Heart right ventricle (tissue), 16 donors: ENCODE measurements at regions of chr19 and their contacts with region 1.

Region 1: DNA sequence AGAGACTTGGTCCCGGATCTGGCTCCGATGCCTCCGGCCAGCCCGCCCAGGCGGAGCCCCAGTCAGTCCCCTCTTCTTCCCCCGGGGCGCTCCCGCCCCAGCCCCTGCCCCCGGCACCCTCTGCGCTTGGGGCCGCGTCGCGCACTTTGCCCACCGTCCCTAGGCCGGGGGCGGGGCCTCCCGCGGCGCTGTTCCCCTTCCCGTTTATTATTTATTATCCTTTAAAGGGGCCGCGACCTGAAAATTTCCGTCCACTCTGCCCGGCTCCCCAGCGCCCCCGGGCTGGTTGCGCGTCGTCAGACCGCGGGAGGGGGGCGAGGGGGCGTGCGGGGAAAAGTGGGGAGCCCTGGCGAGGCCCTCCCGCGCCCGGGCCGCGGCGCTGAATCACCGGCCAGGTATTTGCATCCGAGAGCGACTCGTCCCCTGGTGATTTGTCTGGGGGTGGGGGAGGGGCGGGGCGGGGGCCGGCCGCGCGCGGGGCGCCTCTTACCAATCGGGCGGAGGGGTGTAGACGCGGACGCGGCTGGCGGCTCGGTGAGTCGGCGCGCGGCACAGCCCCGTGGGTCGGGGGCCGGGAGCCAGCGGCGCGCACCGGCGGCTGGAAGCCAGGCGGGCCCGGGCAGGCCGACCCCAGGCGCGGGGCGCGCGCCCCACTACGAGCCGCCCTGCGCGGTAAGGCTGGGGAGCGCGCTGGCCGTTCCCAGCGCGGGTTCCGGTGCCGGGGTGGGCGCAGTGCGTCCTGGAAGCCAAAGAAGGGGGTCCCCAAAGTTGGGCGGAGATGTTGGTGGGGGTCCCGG is at the start of gene ARID3A:
- DNase-seq: peak; percentile 77 to 81
- ATAC-seq: peak; percentile 76 to 84 (median 80)
- H3K4me3 ChIP-seq: peak within 1 kb of the TSS; percentile 51 to 99 (median 84)
- H3K27ac ChIP-seq: peak within 1 kb of the TSS in 9 of 10 donors; percentile 54 to 98 (median 85)
- H3K4me1 ChIP-seq: peaks cover 7 to 52% (median 20%) of the 10 kb centered on the region in 9 donors
- H3K27me3 ChIP-seq: peaks cover 4 to 9% (median 8%) of the 10 kb centered on the region in 7 donors
- CTCF ChIP-seq: no peak
- total RNA-seq, gene ARID3A: 3.0 to 11.7 (median 5.3) TPM

Region 2: GRCh38 chr19:814258-815078 is 111.3 kb before region 1 on chr19:
- intact Hi-C with region 1: no loop called
- DNase-seq: peak in 1 of 2 donors; percentile 8
- ATAC-seq: peak in 3 of 8 donors; percentile 7 to 33 (median 10)
- H3K4me3 ChIP-seq: no peak overlapping the region
- H3K27ac ChIP-seq: no peak overlapping the region
- H3K4me1 ChIP-seq: no peaks in the 10 kb centered on the region
- H3K27me3 ChIP-seq: no peaks in the 10 kb centered on the region
- CTCF ChIP-seq: no peak

Region 3: GRCh38 chr19:860481-861101 is 65.1 kb before region 1 on chr19:
- intact Hi-C with region 1: loop called in 4 of 10 experiments (anchors 2 to 5 kb)
- DNase-seq: peak in 1 of 2 donors; percentile 75
- ATAC-seq: peak; percentile 46 to 67 (median 54)
- H3K4me3 ChIP-seq: peak overlapping the region; percentile 16 to 57 (median 46)
- H3K27ac ChIP-seq: peak overlapping the region in 8 of 10 donors; percentile 34 to 86 (median 78)
- H3K4me1 ChIP-seq: peaks cover 0 to 46% (median 10%) of the 10 kb centered on the region in 9 donors
- H3K27me3 ChIP-seq: peaks cover 0 to 51% (median 37%) of the 10 kb centered on the region in 7 donors
- CTCF ChIP-seq: peak in 5 of 9 donors; percentile 19 to 43 (median 25)

Region 4: GRCh38 chr19:871446-872265 is 54.1 kb before region 1 on chr19:
- intact Hi-C with region 1: no loop called
- DNase-seq: no peak
- ATAC-seq: peak in 1 of 8 donors; percentile 33
- H3K4me3 ChIP-seq: peak overlapping the region in 1 of 10 donors; percentile 18
- H3K27ac ChIP-seq: peak overlapping the region in 3 of 10 donors; percentile 49 to 71 (median 52)
- H3K4me1 ChIP-seq: peaks cover 0 to 40% (median 8%) of the 10 kb centered on the region in 9 donors
- H3K27me3 ChIP-seq: no peaks in the 10 kb centered on the region
- CTCF ChIP-seq: no peak

Region 5: GRCh38 chr19:887072-887471 is 38.7 kb before region 1 on chr19:
- intact Hi-C with region 1: no loop called
- DNase-seq: no peak
- ATAC-seq: no peak
- H3K4me3 ChIP-seq: no peak overlapping the region
- H3K27ac ChIP-seq: no peak overlapping the region
- H3K4me1 ChIP-seq: peaks cover 0 to 9% (median 3%) of the 10 kb centered on the region in 9 donors
- H3K27me3 ChIP-seq: no peaks in the 10 kb centered on the region
- CTCF ChIP-seq: no peak

Region 6: GRCh38 chr19:947265-948036 is 21.7 kb after region 1 on chr19:
- intact Hi-C with region 1: no loop called
- DNase-seq: peak; percentile 53 to 59
- ATAC-seq: peak; percentile 50 to 79 (median 72)
- H3K4me3 ChIP-seq: no peak overlapping the region
- H3K27ac ChIP-seq: peak overlapping the region in 1 of 10 donors; percentile 47
- H3K4me1 ChIP-seq: peaks cover 0 to 27% (median 0%) of the 10 kb centered on the region in 9 donors
- H3K27me3 ChIP-seq: no peaks in the 10 kb centered on the region
- CTCF ChIP-seq: no peak

Region 7: GRCh38 chr19:984165-984967 is 58.6 kb after region 1 on chr19 and contains the start of gene WDR18:
- intact Hi-C with region 1: loop called (anchors 1 to 2 kb)
- DNase-seq: peak; percentile 94 to 95
- ATAC-seq: peak; percentile 92 to 97 (median 96)
- H3K4me3 ChIP-seq: peak within 1 kb of the TSS; percentile 49 to 99 (median 94)
- H3K27ac ChIP-seq: peak within 1 kb of the TSS in 9 of 10 donors; percentile 77 to 92 (median 87)
- H3K4me1 ChIP-seq: peaks cover 4 to 36% (median 22%) of the 10 kb centered on the region in 9 donors
- H3K27me3 ChIP-seq: no peaks in the 10 kb centered on the region
- CTCF ChIP-seq: peak in 6 of 9 donors; percentile 14 to 48 (median 35)
- total RNA-seq, gene WDR18: 17.3 to 25.0 (median 20.3) TPM

Region 8: GRCh38 chr19:996051-996838 is 70.5 kb after region 1 on chr19:
- intact Hi-C with region 1: loop called in 2 of 10 experiments (anchors 1 to 2 kb)
- DNase-seq: no peak
- ATAC-seq: peak in 3 of 8 donors; percentile 4 to 14 (median 5)
- H3K4me3 ChIP-seq: peak overlapping the region in 1 of 10 donors; percentile 18
- H3K27ac ChIP-seq: no peak overlapping the region
- H3K4me1 ChIP-seq: peaks cover 2 to 21% (median 14%) of the 10 kb centered on the region in 9 donors
- H3K27me3 ChIP-seq: peaks cover 23 to 63% (median 59%) of the 10 kb centered on the region in 7 donors
- CTCF ChIP-seq: no peak

Region 9: DNA sequence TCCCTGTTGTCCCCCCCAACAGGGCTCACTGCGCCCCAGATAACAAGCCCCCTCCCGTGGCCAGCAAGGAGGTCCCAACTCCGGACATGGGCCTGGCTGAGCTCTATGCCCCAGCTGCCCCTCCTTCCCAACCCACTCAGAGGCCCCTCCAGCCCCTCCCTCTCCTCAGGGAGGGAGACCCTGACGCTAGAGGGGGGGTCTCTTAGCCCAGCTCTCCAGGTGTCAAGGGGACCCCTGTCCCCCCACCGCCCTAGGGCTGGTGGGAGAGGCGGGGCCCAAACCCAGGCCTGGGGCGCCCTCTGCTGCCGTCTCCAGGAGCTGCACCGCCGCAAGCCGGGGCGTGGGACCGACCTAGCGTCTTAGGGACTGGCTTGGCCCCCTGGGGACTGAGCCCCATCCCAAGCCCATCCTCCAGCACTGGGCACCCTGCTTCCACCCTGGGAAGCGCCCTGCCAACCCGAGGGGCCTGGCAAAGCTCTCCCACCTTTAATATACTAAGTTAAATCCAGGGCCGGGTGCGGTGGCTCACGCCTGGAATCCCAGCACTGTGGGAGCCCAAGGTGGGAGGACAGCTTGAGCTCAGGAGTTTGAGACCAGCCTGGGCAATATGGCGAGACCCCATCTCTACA is 75.9 kb after region 1 on chr19:
- intact Hi-C with region 1: loop called in 2 of 10 experiments (anchors 1 to 2 kb)
- DNase-seq: peak in 1 of 2 donors; percentile 68
- ATAC-seq: peak; percentile 46 to 77 (median 65)
- H3K4me3 ChIP-seq: no peak overlapping the region
- H3K27ac ChIP-seq: no peak overlapping the region
- H3K4me1 ChIP-seq: peaks cover under 1 to 19% (median 13%) of the 10 kb centered on the region in 9 donors
- H3K27me3 ChIP-seq: peaks cover 21 to 70% (median 54%) of the 10 kb centered on the region in 7 donors
- CTCF ChIP-seq: peak; percentile 77 to 96 (median 90)

Region 10: GRCh38 chr19:1241417-1242095 is 315.8 kb after region 1 on chr19 and contains the start of gene ATP5F1D:
- intact Hi-C with region 1: loop called in 3 of 10 experiments (anchors 5 to 10 kb)
- DNase-seq: peak; percentile 94 to 96
- ATAC-seq: peak; percentile 31 to 77 (median 62)
- H3K4me3 ChIP-seq: peak within 1 kb of the TSS; percentile 63 to 93 (median 86)
- H3K27ac ChIP-seq: peak within 1 kb of the TSS; percentile 95 to 100 (median 100)
- H3K4me1 ChIP-seq: peaks cover 42 to 84% (median 76%) of the 10 kb centered on the region in 9 donors
- H3K27me3 ChIP-seq: peaks cover 0 to 16% (median 0%) of the 10 kb centered on the region in 7 donors
- CTCF ChIP-seq: peak in 1 of 9 donors; percentile 12
- total RNA-seq, gene ATP5F1D: 491 to 770 (median 553) TPM

Region 11: DNA sequence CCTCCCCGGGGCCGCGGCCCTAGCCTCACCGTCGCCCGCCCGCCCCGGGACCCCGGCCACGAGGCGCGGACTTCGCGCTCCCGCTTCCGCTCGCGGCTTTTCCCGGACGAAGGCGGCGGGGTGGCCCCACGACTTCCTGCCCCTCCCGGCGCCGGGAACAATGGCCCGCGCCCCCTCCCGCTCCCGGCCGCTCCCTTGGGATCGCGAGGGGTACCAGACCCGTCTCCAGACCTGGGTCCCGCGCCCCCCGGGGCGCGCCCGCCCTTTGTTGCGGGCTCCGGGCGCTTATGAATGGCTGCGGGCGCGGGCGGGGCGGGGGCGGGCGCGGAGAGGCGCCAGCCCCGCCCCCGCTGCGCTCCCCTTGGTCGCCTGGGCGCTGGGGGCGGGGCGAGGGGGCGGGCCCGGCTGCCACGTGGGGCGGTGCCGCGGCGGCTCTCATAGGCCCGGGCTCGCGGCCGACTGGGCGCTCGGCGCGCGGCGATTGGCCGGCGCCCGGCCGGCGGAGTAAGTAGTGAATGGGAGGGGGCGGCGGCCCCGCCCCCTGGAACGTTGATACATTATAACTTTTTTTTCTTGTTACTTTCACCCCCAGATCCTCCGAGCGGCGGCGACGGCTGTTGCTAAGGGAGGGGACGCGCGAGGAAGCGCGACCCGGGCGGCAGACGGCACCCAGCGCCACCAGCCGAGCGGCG is 323.7 kb after region 1 on chr19:
- intact Hi-C with region 1: loop called in 2 of 10 experiments (anchors 5 to 10 kb)
- DNase-seq: peak; percentile 91 to 94
- ATAC-seq: peak in 5 of 8 donors; percentile 1 to 22 (median 3)
- H3K4me3 ChIP-seq: peak overlapping the region; percentile 69 to 99 (median 94)
- H3K27ac ChIP-seq: peak overlapping the region; percentile 95 to 100 (median 100)
- H3K4me1 ChIP-seq: peaks cover 39 to 75% (median 65%) of the 10 kb centered on the region in 9 donors
- H3K27me3 ChIP-seq: no peaks in the 10 kb centered on the region
- CTCF ChIP-seq: no peak